Caco-2 (cell line): ENCODE measurements at regions of chrX and their contacts with region 1.

Region 1: DNA sequence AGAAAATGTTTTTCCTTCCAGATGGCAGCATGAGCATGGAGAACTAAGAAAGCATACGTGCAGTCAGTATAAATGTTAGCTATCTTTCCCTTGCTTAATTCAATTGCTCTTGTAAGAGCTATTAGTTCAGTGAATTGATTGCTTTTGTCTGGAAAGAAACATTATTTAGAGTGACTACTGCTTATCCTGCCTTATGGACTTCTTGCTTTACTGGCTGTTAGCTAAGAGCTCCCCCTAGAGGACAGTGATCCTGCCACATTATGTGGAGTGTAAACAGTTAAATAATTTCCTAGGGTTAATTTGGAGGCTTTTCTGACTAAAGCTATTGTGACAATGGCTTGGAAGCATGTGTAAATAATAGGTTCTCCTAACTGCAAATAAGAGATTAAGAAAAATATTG is 1402.4 kb downstream of the FAM133A start:
- DNase-seq: peak in 1 of 2 experiments; percentile 34
- H3K4me3 ChIP-seq: no peak overlapping the region
- H3K4me3 Mint-ChIP-seq: no peak overlapping the region
- H3K27ac Mint-ChIP-seq: no peak overlapping the region
- H3K4me1 ChIP-seq: no peaks in the 10 kb centered on the region
- H3K4me1 Mint-ChIP-seq: no peaks in the 10 kb centered on the region
- H3K27me3 ChIP-seq: no peaks in the 10 kb centered on the region
- H3K27me3 Mint-ChIP-seq: no peaks in the 10 kb centered on the region
- CTCF ChIP-seq: peak; percentile 22 to 27

Region 2: DNA sequence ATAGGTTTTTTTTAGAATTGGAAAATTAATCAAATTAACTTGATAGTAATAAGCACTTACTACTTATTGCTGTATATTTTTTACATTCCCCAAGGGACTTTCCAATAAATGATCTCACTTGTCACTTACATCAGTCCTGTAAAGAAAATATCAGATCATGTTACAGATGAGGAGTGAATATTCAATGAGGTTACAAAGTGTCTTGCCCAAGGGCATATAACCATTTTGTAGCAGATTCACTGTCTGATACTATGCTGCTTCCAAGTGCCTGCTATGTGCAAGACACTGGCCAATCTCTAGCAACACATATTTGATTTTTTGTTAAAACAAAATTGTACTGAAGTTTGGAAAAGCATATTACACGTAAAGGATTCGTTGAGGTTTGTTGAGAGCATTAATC is 114.7 kb before region 1 on chrX:
- CTCF ChIA-PET with region 1: no interaction called
- POLR2A ChIA-PET with region 1: no interaction called
- intact Hi-C with region 1: loop called (anchors 10 kb)
- DNase-seq: no peak
- H3K4me3 ChIP-seq: no peak overlapping the region
- H3K4me3 Mint-ChIP-seq: no peak overlapping the region
- H3K27ac Mint-ChIP-seq: no peak overlapping the region
- H3K4me1 ChIP-seq: no peaks in the 10 kb centered on the region
- H3K4me1 Mint-ChIP-seq: no peaks in the 10 kb centered on the region
- H3K27me3 ChIP-seq: no peaks in the 10 kb centered on the region
- H3K27me3 Mint-ChIP-seq: no peaks in the 10 kb centered on the region
- CTCF ChIP-seq: no peak